ENCODE measurements at regions of chr6 and their contacts with region 1.

Region 1: DNA sequence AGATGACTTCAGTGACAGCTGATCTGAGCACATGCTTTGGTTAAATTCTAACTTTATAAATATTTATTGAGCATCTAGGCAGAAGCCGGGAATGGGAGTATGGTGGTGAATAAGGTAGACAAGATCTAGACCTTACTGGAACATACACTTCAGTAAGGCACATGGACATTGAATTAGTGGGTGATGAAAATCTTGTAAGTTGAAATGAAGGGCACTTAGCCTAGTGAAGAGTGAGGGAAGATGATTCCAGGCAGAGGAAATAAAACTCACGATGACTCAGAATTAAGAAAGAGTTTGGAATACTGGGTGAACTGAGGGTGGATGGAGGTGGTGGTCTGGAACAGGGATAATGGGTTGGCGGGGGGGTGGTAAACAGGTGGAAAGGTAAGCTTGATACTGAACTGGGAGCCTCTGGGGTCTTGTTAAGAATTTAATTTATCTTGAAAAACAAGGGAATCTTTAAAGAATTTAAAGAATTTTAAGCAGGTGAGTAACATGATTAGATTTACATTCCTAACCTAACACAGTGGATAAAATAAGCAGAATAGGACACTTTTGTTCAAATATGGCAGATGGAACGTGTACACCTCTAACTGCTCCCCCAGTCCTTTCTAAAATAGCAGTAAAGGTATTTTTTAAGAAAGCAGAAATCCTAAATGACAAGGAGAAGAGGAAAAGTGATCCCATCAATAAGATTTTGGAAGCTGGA is 75.2 kb upstream of the ARHGAP18 start:
- DNase-seq: no peak
- H3K4me3 ChIP-seq: no peak overlapping the region
- H3K27ac ChIP-seq: no peak overlapping the region
- H3K4me1 ChIP-seq: no peaks in the 10 kb centered on the region
- H3K27me3 ChIP-seq: peaks cover 0 to 1% of the 10 kb centered on the region in 2 experiments
- CTCF ChIP-seq: no peak
- POLR2A ChIP-seq: no peak

Region 2: GRCh38 chr6:129590408-129591022 is 194.7 kb before region 1 on chr6:
- CTCF ChIA-PET with region 1: no interaction called
- POLR2A ChIA-PET with region 1: no interaction called
- dilution Hi-C with region 1: no loop called
- intact Hi-C with region 1: no loop called
- DNase-seq: peak; percentile 34
- H3K4me3 ChIP-seq: no peak overlapping the region
- H3K27ac ChIP-seq: no peak overlapping the region
- H3K4me1 ChIP-seq: no peaks in the 10 kb centered on the region
- H3K27me3 ChIP-seq: no peaks in the 10 kb centered on the region
- CTCF ChIP-seq: no peak
- POLR2A ChIP-seq: no peak

Region 3: DNA sequence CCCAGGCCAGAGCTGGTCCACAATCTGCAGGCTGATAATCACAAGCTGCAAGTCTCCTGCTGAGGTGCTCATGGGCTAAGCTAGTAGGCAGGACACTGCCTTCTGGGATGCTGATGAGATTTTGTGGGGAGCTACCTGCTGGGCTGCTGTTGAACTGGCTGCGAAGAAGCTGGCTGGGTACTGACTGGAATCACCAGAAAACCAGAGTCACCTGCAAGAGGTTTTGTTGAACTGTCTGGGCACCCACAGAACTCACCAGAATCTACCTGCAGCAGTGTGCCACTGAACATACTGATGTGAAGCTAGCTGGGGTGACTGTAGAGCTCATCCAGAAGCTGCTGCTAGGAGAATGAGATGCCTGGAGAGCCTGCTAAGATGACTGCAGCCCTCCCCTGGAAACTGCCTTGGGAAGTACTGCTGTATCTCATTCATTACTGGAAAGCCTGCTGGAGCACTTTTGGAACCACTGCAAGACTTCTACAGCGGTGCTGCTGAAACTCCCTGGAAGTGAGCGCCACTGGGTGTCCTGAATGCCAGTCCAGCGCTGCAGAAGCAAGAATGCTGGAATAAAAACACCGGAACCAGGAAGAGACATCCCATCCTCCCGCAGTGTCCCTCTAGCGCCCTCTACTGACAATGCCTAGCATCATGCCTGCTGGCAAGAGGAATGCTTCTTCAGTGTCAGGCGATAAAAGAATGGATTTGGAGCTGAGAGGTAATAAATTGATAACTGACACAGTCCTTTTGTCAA is 10.3 kb before region 1 on chr6:
- CTCF ChIA-PET with region 1: interaction called, 14 read pairs
- POLR2A ChIA-PET with region 1: no interaction called
- dilution Hi-C with region 1: no loop called
- intact Hi-C with region 1: no loop called
- DNase-seq: peak; percentile 76
- H3K4me3 ChIP-seq: no peak overlapping the region
- H3K27ac ChIP-seq: no peak overlapping the region
- H3K4me1 ChIP-seq: no peaks in the 10 kb centered on the region
- H3K27me3 ChIP-seq: no peaks in the 10 kb centered on the region
- CTCF ChIP-seq: peak; percentile 91 to 96
- POLR2A ChIP-seq: no peak

Measured in endothelial cell of umbilical vein (primary cell).